ENCODE measurements at regions of chr11 and their contacts with region 1.

Region 1: DNA sequence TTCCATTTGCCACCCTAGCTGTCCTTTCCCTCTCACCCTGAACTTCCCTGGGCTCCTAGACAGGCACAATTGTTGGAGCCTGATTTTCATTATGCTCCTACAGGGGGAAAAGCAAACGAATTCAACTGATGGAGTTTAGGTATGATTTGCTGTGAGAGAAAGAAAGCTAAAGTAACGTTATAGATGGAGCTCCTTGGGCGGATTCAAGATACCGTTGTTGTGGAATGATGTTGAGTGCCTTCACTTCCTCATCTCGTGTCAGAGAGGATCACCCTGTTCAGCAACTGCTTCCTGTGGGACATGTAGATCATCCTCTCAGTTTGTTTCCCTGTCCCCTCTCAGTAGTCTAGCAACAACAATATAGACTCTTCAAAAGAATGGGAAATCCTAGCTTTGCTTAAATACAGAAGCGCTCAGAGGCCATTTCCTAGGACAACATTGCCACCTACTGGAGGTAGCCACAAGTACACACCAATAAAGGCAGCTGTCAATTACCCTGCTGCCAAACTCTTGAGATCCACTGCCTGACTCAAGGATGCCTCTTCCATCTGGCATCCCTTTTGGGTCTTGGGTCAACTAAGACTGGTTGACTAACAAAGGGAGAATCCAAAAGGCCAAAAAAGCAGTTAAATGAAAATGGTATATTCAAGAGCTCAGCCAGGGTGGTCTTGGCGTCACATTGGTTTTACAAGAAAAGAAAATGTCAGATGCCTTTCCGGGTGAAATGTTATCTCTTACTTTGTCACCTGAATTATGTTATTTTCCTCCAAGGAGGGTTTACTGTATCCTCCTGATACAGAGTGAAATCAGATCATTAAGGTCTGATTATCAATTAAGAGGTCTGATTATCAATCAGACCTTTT is 13.5 kb upstream of the DTX4 start:
- DNase-seq: peak; percentile 61

Region 2: DNA sequence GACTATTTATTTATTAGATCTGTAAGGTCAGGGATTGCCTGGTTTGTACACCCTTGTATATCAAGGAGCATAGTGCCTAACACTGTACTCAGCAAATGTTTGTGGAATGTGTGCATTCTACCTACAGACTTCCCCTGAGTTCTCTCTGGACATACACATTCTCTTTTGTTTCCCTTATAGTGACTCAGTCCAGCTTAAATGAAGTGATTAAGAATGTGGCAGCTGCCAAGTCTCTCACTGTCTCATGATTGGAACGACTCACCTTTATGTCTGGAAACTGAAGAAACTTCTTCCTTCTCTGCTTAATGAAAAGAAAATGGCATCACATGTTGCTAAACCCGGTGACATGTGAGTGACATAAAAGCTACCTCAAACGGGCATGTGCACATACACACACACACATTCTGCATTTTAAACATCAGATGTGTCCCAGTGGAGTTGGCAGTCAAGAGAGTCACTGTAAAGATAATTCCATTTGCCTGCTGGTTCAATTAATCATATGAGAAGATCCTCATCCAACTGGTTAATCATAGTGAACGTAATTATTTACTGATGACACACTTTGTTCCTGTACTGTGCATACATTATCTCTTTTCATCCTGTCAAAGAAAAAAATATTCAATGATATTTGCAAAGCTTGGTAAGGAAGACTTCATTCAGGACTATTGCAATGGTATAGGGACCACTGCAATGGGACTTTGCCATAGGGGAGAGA is 469.5 kb before region 1 on chr11:
- CTCF ChIA-PET with region 1: no interaction called
- POLR2A ChIA-PET with region 1: no interaction called
- DNase-seq: no peak

Region 3: DNA sequence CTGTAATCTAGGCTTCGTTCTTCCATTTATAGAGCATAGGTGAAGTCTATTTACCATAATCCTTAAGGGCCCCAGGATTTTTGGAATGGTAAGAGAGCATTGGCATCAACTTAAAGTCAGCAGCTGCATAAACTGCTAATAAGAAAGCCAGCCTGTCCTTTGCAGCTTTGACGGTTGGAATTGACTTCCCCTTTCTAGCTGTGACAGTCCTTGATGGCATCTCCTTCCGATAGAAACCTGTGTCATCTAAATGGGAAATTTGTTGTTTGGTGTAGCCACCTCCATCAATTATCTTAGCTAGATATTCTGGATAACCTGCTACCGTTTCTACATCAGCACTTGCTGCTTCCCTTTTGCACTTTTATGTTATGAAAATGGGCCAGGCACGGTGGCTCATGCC is 130.3 kb before region 1 on chr11:
- CTCF ChIA-PET with region 1: no interaction called
- POLR2A ChIA-PET with region 1: no interaction called
- DNase-seq: no peak

Region 4: GRCh38 chr11:59135648-59136461 is 22.6 kb before region 1 on chr11:
- CTCF ChIA-PET with region 1: interaction called, 10 read pairs
- POLR2A ChIA-PET with region 1: no interaction called
- DNase-seq: peak; percentile 82

Region 5: DNA sequence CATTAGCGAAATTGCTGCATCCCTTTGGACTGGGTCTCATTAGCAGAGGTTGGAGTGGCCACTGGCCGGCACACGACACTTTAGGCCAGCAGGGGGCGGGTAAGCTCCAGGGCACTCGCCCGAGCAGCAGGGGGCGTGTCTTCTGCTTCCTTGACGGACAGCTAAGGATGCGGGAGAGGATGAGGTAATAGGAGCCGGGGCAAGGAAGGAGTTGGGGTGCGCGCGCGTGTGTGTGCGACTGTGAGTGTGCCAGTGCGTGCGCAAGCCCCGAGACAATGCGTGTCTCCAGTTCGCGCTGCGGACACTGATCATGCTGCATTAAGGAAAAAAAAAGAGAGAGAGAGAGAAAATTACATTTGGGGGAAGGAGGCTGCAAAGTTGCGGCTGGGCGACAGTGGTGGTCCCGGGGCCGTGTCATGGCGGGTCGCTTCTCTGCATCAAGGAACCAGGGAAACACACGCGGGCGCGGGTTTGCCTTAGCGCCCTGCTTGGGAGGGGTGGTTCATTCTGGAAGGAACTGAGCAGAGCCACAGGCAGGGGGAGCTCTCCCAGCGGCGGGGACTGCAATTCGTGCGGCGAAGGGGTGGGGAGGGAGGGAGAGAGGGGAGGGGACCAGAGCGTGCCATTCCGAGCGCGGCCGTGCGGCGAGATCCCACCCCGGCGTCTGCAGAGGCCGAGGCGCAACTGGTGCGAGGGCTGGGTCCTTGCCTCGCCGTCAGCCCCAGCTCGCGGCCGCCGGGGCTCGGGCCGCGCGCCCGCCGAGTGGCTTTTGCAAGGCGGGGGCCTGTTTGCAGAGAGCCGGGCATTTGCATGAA is 13.3 kb after region 1 on chr11 and contains the start of gene DTX4:
- CTCF ChIA-PET with region 1: interaction called, 10 read pairs
- POLR2A ChIA-PET with region 1: no interaction called
- DNase-seq: peak; percentile 85